H1 (cell line): ENCODE measurements at regions of chr19 and their contacts with region 1.

Region 1: DNA sequence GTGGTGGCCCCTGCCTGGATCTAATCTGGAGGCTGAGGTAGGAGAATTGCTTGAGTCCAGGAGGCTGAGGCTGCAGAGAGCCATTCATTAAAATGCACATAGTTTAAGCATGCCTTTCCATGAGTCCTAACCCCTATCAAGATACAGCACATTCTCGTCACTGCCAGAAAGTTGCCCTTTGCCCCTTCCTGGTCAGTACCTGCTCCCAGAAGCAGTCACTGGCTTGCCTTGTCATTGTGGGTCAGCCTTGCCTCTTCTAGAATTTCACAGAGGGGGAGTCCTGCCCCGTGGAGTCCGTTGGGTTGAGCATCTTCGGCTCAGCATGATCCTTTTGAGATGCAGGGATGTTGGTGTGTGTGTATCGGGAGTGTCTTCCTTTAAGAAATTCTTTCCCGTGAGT is 10.8 kb downstream of the BICRA start:
- DNase-seq: peak in 1 of 2 experiments; percentile 70
- H3K4me3 ChIP-seq: no peak overlapping the region; a peak in 1 of 8 replicates
- H3K27ac ChIP-seq: no peak overlapping the region
- H3K4me1 ChIP-seq: peaks cover 12 to 48% (median 34%) of the 10 kb centered on the region in 4 experiments
- H3K27me3 ChIP-seq: no peaks in the 10 kb centered on the region
- CTCF ChIP-seq: no peak
- EP300 ChIP-seq: peak in 1 of 2 experiments; percentile 75; a peak in 1 of 3 replicates
- POLR2A ChIP-seq: no peak
- RAD21 ChIP-seq: peak in 1 of 2 experiments; percentile 7; a peak in 1 of 4 replicates

Region 2: GRCh38 chr19:47608074-47608918 is 11.5 kb before region 1 on chr19:
- CTCF ChIA-PET with region 1: interaction called, 5 read pairs
- POLR2A ChIA-PET with region 1: interaction called, 59 read pairs
- DNase-seq: peak; percentile 71 to 97
- H3K4me3 ChIP-seq: peak overlapping the region; percentile 83 to 98 (median 87)
- H3K27ac ChIP-seq: peak overlapping the region; percentile 67
- H3K4me1 ChIP-seq: peaks cover 11 to 23% (median 15%) of the 10 kb centered on the region in 4 experiments
- H3K27me3 ChIP-seq: no peaks in the 10 kb centered on the region
- CTCF ChIP-seq: no peak
- EP300 ChIP-seq: no peak
- POLR2A ChIP-seq: peak in 1 of 2 experiments; percentile 75; a peak in 1 of 3 replicates
- RAD21 ChIP-seq: peak; percentile 6 to 17; a peak in 1 of 4 replicates